ENCODE measurements at regions of chr17 and their contacts with region 1.

Region 1: GRCh38 chr17:71402661-71403141 is 718.1 kb upstream of the SOX9 start:
- DNase-seq: peak; percentile 88
- H3K4me3 ChIP-seq: no peak overlapping the region
- H3K27ac ChIP-seq: peak overlapping the region; percentile 82
- H3K4me1 ChIP-seq: peaks cover 39% of the 10 kb centered on the region
- H3K27me3 ChIP-seq: no peaks in the 10 kb centered on the region
- CTCF ChIP-seq: no peak

Region 2: DNA sequence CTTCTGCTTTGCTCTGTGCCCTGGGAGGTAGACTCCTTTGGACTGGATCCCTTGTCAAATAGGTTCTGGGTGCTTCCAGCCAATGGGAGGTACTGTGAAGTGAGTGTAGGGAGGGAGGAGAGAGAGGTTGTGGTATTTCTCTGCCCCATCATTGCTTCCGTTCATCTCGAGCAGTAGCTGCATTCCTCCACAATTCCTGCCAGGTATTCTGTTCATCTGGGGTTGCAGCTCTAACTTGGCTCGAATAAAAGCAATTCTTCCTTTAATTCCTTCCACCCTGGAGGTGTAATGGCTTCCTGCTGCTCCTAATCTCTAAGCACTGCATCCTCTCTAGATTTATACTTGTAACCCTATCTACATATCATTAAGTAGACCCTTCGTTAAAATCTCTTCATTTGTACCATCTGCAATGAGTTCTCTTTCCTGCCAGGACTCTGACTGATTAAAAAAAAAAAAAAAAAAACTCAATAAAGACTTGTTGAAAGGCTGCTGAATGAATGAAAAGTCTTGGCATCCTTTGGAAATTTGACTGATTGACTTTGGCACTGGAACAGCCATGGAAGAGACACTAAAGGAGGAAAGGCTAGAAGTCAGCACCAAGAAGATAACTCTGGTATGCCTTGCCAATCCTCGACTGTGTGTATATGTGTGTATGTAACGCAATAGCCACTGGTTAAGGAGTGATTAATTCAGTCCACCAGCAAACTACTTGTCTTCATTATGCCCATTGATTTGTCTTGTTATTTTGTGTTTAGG is 101.2 kb after region 1 on chr17:
- CTCF ChIA-PET with region 1: interaction called, 10 read pairs
- dilution Hi-C with region 1: no loop called
- in situ Hi-C with region 1: no loop called
- intact Hi-C with region 1: no loop called
- DNase-seq: no peak
- H3K4me3 ChIP-seq: no peak overlapping the region
- H3K27ac ChIP-seq: no peak overlapping the region
- H3K4me1 ChIP-seq: peaks cover 15% of the 10 kb centered on the region
- H3K27me3 ChIP-seq: no peaks in the 10 kb centered on the region
- CTCF ChIP-seq: no peak

Region 3: DNA sequence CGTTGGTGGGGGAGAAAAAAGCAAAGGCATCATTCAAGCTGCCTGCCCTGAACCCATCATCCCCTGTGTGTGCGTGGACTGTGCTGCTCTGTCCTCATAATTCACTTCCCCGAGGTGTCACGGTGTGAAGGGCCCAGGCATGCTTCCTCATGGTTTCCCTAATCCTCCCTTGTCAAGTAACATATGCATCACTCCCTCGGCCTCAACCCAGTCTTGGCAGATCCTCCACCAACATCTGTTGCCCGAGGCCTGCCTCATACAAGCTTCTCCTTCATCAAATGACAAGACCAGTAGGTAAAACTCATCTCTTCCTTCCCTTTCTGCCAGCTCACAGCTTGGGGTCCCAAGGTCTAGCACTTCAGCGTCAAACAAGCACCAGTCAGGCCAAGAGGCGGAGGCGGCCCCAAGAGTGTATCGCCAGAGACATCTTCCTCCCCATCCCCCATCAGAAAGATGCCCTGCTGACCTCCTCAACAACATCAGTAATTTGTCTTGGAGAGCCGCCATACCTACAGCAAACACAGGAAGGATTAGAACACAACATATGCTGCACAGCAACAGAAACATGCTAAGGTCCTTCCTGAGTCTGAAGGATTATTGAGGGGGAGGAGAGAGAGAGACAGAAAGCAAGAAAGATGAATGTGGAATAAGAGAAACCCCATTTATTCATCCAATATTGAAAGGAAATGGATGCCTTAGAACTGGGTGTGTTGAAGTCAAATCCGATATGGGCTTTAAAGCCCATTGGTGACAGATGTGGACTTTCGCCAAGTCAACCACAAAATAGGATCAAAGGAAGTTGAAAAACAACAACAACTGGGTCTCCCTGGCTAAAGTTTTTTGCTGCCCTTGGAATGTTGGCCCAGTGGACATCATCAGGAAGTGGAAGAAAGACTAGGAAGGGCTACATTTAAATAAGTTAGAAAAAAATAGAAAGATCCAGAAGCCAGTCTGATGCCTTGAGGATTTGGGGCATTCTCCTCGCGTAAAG is 756.5 kb after region 1 on chr17:
- CTCF ChIA-PET with region 1: no interaction called
- dilution Hi-C with region 1: no loop called
- in situ Hi-C with region 1: no loop called
- intact Hi-C with region 1: no loop called
- DNase-seq: no peak
- H3K4me3 ChIP-seq: no peak overlapping the region
- H3K27ac ChIP-seq: no peak overlapping the region
- H3K4me1 ChIP-seq: no peaks in the 10 kb centered on the region
- H3K27me3 ChIP-seq: no peaks in the 10 kb centered on the region
- CTCF ChIP-seq: no peak